K562 (cell line): ENCODE measurements at regions of chr1 and their contacts with region 1.

Region 1: GRCh38 chr1:195899762-195900352 is 708.4 kb downstream of the KCNT2 start:
- DNase-seq: peak; percentile 49 to 90 (median 62)
- ATAC-seq: peak; percentile 90
- H3K4me3 ChIP-seq: no peak overlapping the region
- H3K27ac ChIP-seq: peak overlapping the region; percentile 65
- H3K4me1 ChIP-seq: peaks cover 0 to 30% of the 10 kb centered on the region in 2 experiments; a peak in 2 of 5 replicates
- H3K27me3 ChIP-seq: no peaks in the 10 kb centered on the region
- CTCF ChIP-seq: no peak
- EP300 ChIP-seq: peak; percentile 80
- POLR2A ChIP-seq: no peak
- RAD21 ChIP-seq: no peak; a peak in 1 of 4 replicates

Region 2: GRCh38 chr1:196029410-196029809 is 129.6 kb after region 1 on chr1:
- CTCF ChIA-PET with region 1: no interaction called
- POLR2A ChIA-PET with region 1: no interaction called
- in situ Hi-C with region 1: no loop called
- intact Hi-C with region 1: loop called (anchors 5 kb)
- DNase-seq: no peak
- ATAC-seq: no peak
- H3K4me3 ChIP-seq: no peak overlapping the region
- H3K27ac ChIP-seq: no peak overlapping the region
- H3K4me1 ChIP-seq: no peaks in the 10 kb centered on the region; a peak in 1 of 5 replicates
- H3K27me3 ChIP-seq: no peaks in the 10 kb centered on the region
- CTCF ChIP-seq: no peak; a peak in 1 of 6 replicates
- EP300 ChIP-seq: no peak
- POLR2A ChIP-seq: no peak
- RAD21 ChIP-seq: peak in 1 of 2 experiments; percentile 47; a peak in 2 of 4 replicates

Region 3: DNA sequence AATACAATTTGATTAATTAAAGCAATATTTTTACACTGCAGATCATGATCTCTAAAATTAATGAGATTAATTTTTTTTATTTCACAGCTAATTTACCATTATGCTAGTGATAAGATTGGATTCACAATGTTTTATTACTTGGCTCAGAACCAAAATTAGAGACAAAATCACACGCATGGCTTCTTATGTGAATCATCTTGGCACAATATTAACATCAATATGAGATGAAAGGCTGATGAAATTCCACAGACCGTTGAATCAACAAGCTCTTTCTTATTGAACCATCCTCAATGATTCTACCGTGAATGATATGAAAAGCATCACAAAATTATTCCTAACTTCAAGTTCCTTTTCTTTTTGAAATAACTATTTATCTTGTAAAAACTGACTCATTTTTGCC is 163.4 kb after region 1 on chr1:
- CTCF ChIA-PET with region 1: interaction called, 3 read pairs
- POLR2A ChIA-PET with region 1: no interaction called
- in situ Hi-C with region 1: no loop called
- intact Hi-C with region 1: loop called (anchors 1 kb)
- DNase-seq: no peak
- ATAC-seq: no peak
- H3K4me3 ChIP-seq: no peak overlapping the region
- H3K27ac ChIP-seq: no peak overlapping the region
- H3K4me1 ChIP-seq: no peaks in the 10 kb centered on the region
- H3K27me3 ChIP-seq: no peaks in the 10 kb centered on the region
- CTCF ChIP-seq: no peak
- EP300 ChIP-seq: no peak
- POLR2A ChIP-seq: no peak
- RAD21 ChIP-seq: no peak